ENCODE measurements at regions of chr2 and their contacts with region 1.

Region 1: GRCh38 chr2:172931918-172932520 is 143.6 kb upstream of the MAP3K20 start:
- DNase-seq: peak; percentile 72
- H3K4me3 Mint-ChIP-seq: no peak overlapping the region
- H3K27ac Mint-ChIP-seq: no peak overlapping the region
- H3K4me1 Mint-ChIP-seq: peaks cover 41% of the 10 kb centered on the region
- H3K27me3 Mint-ChIP-seq: no peaks in the 10 kb centered on the region
- CTCF ChIP-seq: peak; percentile 54

Region 2: GRCh38 chr2:172806493-172806892 is 125.5 kb before region 1 on chr2:
- CTCF ChIA-PET with region 1: interaction called, 141 read pairs
- POLR2A ChIA-PET with region 1: interaction called, 9 read pairs
- intact Hi-C with region 1: loop called (anchors 1 kb)
- DNase-seq: peak; percentile 56
- H3K4me3 Mint-ChIP-seq: no peak overlapping the region
- H3K27ac Mint-ChIP-seq: no peak overlapping the region
- H3K4me1 Mint-ChIP-seq: no peaks in the 10 kb centered on the region
- H3K27me3 Mint-ChIP-seq: no peaks in the 10 kb centered on the region
- CTCF ChIP-seq: peak; percentile 81

Region 3: GRCh38 chr2:172823261-172823850 is 108.7 kb before region 1 on chr2:
- CTCF ChIA-PET with region 1: interaction called, 19 read pairs
- POLR2A ChIA-PET with region 1: interaction called, 3 read pairs
- intact Hi-C with region 1: no loop called
- DNase-seq: no peak
- H3K4me3 Mint-ChIP-seq: no peak overlapping the region
- H3K27ac Mint-ChIP-seq: no peak overlapping the region
- H3K4me1 Mint-ChIP-seq: no peaks in the 10 kb centered on the region
- H3K27me3 Mint-ChIP-seq: no peaks in the 10 kb centered on the region
- CTCF ChIP-seq: no peak

Region 4: GRCh38 chr2:172864182-172864581 is 67.8 kb before region 1 on chr2:
- CTCF ChIA-PET with region 1: interaction called, 20 read pairs
- POLR2A ChIA-PET with region 1: no interaction called
- intact Hi-C with region 1: loop called (anchors 1 kb)
- DNase-seq: peak; percentile 72
- H3K4me3 Mint-ChIP-seq: no peak overlapping the region
- H3K27ac Mint-ChIP-seq: no peak overlapping the region
- H3K4me1 Mint-ChIP-seq: no peaks in the 10 kb centered on the region
- H3K27me3 Mint-ChIP-seq: peaks cover 10% of the 10 kb centered on the region
- CTCF ChIP-seq: peak; percentile 65

Region 5: GRCh38 chr2:172900871-172901270 is 31.1 kb before region 1 on chr2:
- CTCF ChIA-PET with region 1: interaction called, 10 read pairs
- POLR2A ChIA-PET with region 1: interaction called, 3 read pairs
- intact Hi-C with region 1: no loop called
- DNase-seq: no peak
- H3K4me3 Mint-ChIP-seq: no peak overlapping the region
- H3K27ac Mint-ChIP-seq: no peak overlapping the region
- H3K4me1 Mint-ChIP-seq: no peaks in the 10 kb centered on the region
- H3K27me3 Mint-ChIP-seq: peaks cover 50% of the 10 kb centered on the region
- CTCF ChIP-seq: no peak

Region 6: GRCh38 chr2:173021939-173022371 is 89.9 kb after region 1 on chr2:
- CTCF ChIA-PET with region 1: interaction called, 27 read pairs
- POLR2A ChIA-PET with region 1: no interaction called
- intact Hi-C with region 1: loop called (anchors 2 kb)
- DNase-seq: peak; percentile 74
- H3K4me3 Mint-ChIP-seq: no peak overlapping the region
- H3K27ac Mint-ChIP-seq: no peak overlapping the region
- H3K4me1 Mint-ChIP-seq: peaks cover 6% of the 10 kb centered on the region
- H3K27me3 Mint-ChIP-seq: no peaks in the 10 kb centered on the region
- CTCF ChIP-seq: peak; percentile 58

Measured in MCF 10A (cell line).